ENCODE measurements at regions of chr17 and their contacts with region 1.

Region 1: GRCh38 chr17:42322382-42323267 is 34.3 kb downstream of the STAT5A start:
- DNase-seq: peak; percentile 97

Region 2: DNA sequence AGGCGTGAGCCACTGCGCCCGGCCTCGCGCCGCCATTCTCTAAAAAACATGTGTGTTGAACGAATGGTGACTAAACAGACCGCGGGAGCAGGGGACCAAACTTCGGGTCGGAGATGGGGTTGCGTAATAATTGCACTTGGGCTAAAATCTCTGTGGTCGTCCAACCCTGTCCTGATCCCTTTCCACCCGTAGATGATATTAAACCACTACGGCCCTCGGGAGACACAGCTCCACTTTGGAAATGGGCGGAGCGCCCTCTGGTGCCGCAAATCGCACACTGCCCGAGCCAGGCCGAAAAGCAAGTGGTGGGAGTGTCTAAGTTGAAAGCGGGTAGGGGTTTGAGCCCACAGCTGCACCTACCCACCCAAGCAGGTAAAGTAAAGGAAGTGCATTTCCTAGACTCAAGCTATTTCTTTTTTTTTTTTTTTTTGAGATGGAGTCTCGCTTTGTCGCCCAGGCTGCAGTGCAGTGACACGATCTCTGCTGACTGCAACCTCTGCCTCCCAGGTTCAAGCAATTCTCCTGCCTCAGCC is 83.4 kb after region 1 on chr17:
- intact Hi-C with region 1: loop called (anchors 2 to 10 kb)
- DNase-seq: peak; percentile 96

Region 3: GRCh38 chr17:42517516-42517915 is 194.9 kb after region 1 on chr17:
- intact Hi-C with region 1: loop called in 1 of 2 experiments (anchors 5 kb)
- DNase-seq: peak; percentile 97

Region 4: DNA sequence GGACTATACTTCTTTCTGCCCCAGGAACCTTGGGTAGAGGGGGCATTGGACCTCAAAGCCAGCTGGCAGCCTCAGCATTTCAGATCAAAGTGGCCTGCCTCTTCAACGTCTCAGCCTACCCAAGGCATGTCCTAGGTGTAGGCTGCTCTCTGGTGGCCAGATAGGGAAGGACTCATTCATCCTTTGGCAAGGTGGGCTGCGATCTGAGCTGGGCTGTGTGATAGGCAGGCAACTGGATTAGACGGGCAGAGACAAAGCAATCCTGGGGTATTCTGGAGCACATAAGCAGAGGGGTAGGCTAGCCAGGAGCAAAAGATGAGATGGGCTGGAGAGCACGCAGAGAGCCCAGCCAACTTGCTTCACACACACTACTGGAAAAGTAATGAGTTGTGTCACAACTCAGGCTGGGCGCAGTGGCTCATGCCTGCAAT is 204.7 kb after region 1 on chr17:
- intact Hi-C with region 1: loop called in 1 of 2 experiments (anchors 5 kb)
- DNase-seq: peak; percentile 91

Measured in posterior vena cava (tissue), 2 donors.